ENCODE measurements at regions of chr1 and their contacts with region 1.

Region 1: GRCh38 chr1:225772323-225772768 is 5.3 kb upstream of the SRP9 start:
- DNase-seq: peak; percentile 99
- ATAC-seq: peak; percentile 87
- H3K4me3 ChIP-seq: peak overlapping the region; percentile 52
- H3K27ac ChIP-seq: peak overlapping the region; percentile 87
- H3K4me1 ChIP-seq: peaks cover 50% of the 10 kb centered on the region
- H3K27me3 ChIP-seq: no peaks in the 10 kb centered on the region
- CTCF ChIP-seq: peak; percentile 98

Region 2: GRCh38 chr1:225508538-225509375 is 263.6 kb before region 1 on chr1:
- CTCF ChIA-PET with region 1: interaction called, 3 read pairs
- POLR2A ChIA-PET with region 1: no interaction called
- intact Hi-C with region 1: loop called (anchors 1 kb)
- DNase-seq: peak; percentile 98
- ATAC-seq: peak; percentile 95
- H3K4me3 ChIP-seq: no peak overlapping the region
- H3K27ac ChIP-seq: peak overlapping the region; percentile 89
- H3K4me1 ChIP-seq: peaks cover 26% of the 10 kb centered on the region
- H3K27me3 ChIP-seq: no peaks in the 10 kb centered on the region
- CTCF ChIP-seq: no peak

Region 3: GRCh38 chr1:225652729-225653462 is 119.5 kb before region 1 on chr1 and contains the start of gene ENAH:
- CTCF ChIA-PET with region 1: interaction called, 14 read pairs
- POLR2A ChIA-PET with region 1: interaction called, 8 read pairs
- intact Hi-C with region 1: loop called (anchors 1 kb)
- DNase-seq: peak; percentile 88
- ATAC-seq: peak; percentile 58
- H3K4me3 ChIP-seq: peak within 1 kb of the TSS; percentile 98
- H3K27ac ChIP-seq: peak within 1 kb of the TSS; percentile 77
- H3K4me1 ChIP-seq: peaks cover 55% of the 10 kb centered on the region
- H3K27me3 ChIP-seq: no peaks in the 10 kb centered on the region
- CTCF ChIP-seq: no peak
- total RNA-seq, gene ENAH: 96.6 and 101 TPM in 2 replicates

Region 4: GRCh38 chr1:225735252-225736149 is 36.8 kb before region 1 on chr1:
- CTCF ChIA-PET with region 1: interaction called, 4 read pairs
- POLR2A ChIA-PET with region 1: no interaction called
- intact Hi-C with region 1: loop called (anchors 1 kb)
- DNase-seq: peak; percentile 95
- ATAC-seq: peak; percentile 83
- H3K4me3 ChIP-seq: 0 out of 2 replicates have a peak overlapping the region, but pooled peaks have one; percentile 4
- H3K27ac ChIP-seq: peak overlapping the region; percentile 68
- H3K4me1 ChIP-seq: peaks cover 30% of the 10 kb centered on the region
- H3K27me3 ChIP-seq: no peaks in the 10 kb centered on the region
- CTCF ChIP-seq: peak; percentile 25; the same call in 1 of the 2 replicates

Region 5: DNA sequence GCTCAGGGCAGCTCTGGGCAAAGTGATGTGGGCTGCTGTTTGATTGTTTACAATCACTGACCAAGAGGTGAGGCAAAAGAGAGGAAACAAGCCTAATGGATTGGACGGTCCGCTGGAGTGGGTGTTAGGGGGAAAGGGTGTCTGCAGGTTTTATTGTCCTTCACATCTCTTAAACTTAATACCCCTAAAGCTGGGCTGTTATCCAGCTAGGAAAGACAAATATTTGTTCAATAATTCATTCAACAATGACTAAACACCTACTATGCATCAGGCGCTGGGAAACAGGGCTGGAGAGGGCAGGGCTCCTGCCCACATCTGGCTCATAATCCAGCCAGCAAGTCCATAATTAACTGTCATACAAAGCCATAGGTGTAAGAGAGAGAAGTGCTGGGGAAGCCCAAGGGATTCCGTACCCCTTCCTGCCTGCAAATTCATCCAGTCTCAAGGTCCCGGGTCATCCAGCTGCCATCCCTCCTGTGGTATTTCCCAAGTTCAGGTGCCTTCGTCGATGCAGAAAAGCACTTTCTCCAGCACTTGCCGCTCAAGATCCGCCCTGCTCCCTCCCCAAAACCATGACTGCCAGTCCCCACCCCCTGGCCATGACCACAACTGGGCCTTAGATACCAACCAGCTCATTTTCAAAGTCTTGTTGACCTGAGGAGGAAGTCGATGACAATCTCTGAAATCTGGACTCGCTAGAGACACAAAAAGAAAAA is 99.2 kb after region 1 on chr1:
- CTCF ChIA-PET with region 1: interaction called, 11 read pairs
- POLR2A ChIA-PET with region 1: no interaction called
- intact Hi-C with region 1: no loop called
- DNase-seq: peak; percentile 99
- ATAC-seq: peak; percentile 86
- H3K4me3 ChIP-seq: peak overlapping the region; percentile 26
- H3K27ac ChIP-seq: peak overlapping the region; percentile 92
- H3K4me1 ChIP-seq: peaks cover 68% of the 10 kb centered on the region
- H3K27me3 ChIP-seq: no peaks in the 10 kb centered on the region
- CTCF ChIP-seq: no peak

Region 6: GRCh38 chr1:225917101-225917500 is 144.8 kb after region 1 on chr1:
- CTCF ChIA-PET with region 1: no interaction called
- POLR2A ChIA-PET with region 1: no interaction called
- intact Hi-C with region 1: no loop called
- DNase-seq: no peak
- ATAC-seq: no peak
- H3K4me3 ChIP-seq: no peak overlapping the region
- H3K27ac ChIP-seq: peak overlapping the region; percentile 25; the same call in 1 of the 2 replicates
- H3K4me1 ChIP-seq: peaks cover 28% of the 10 kb centered on the region
- H3K27me3 ChIP-seq: no peaks in the 10 kb centered on the region
- CTCF ChIP-seq: no peak